ENCODE measurements at regions of chr4 and their contacts with region 1.

Region 1: DNA sequence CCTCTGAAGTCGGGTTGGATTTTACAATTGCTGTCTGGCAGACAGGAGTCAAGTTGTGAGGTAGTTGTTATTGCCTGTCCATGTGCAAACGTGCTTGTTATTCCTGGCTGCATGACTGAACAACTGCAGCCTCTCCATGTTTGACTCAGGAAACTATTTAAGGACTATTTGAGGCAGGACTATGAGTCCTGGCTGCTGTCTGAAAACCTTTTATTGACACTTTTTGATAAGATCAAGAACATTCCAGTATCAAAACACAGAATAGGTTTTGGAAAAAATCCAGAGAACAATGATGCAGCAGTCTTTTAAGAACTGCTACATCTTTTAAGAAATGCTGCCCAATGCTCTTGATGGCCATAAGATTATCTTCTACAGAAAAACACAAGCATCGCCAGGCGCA is 10.0 kb upstream of the SPRY1 start:
- DNase-seq: no peak
- ATAC-seq: peak; percentile 60
- H3K4me3 ChIP-seq: no peak overlapping the region
- H3K27ac ChIP-seq: peak overlapping the region in 1 of 2 donors; percentile 78
- H3K4me1 ChIP-seq: peaks cover 0 to 4% of the 10 kb centered on the region in 2 donors
- H3K27me3 ChIP-seq: no peaks in the 10 kb centered on the region

Region 2: DNA sequence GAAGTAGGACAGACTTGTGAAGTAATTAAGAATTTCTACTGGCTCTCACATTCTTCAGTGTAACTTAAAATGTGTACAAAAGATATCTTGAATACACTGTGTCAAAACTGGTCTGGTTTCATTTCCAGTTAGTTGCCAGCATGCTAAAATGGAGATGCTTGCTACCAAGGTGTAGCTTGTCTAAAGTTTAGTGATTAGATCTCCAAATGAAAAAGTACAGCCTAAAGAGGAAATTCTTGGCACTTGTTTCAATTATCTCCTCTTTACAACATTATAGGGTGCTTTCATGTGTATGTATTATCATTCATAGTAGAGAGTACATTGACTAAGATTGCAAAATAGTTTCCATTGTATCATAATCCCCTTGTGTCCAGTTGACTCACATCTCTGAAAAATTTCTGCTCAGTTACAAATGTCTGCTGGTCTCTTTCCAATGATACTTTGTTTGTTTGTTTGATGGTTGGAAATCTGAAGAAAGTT is 87.4 kb before region 1 on chr4:
- intact Hi-C with region 1: loop called in 1 of 2 experiments (anchors 5 kb)
- DNase-seq: no peak
- ATAC-seq: peak; percentile 79
- H3K4me3 ChIP-seq: no peak overlapping the region
- H3K27ac ChIP-seq: no peak overlapping the region
- H3K4me1 ChIP-seq: peaks cover 4% of the 10 kb centered on the region in 2 donors
- H3K27me3 ChIP-seq: no peaks in the 10 kb centered on the region

Measured in aorta (tissue), 5 donors.